Uterus (tissue), 4 donors: ENCODE measurements at regions of chr12 and their contacts with region 1.

Region 1: DNA sequence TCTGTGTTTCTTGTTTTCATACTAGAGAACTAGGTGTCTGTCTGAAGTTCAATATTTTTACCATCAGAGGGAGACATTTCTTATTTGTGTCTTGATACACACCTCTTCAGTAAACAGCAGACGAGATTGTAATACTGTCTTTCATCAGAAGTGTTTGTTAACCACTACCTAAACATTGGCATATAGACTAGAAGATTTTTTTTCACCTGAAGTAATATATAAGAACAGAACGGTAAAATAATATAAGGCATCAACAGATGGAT is 190.7 kb downstream of the ACSS3 start:
- DNase-seq: no peak
- H3K4me3 ChIP-seq: no peak overlapping the region
- H3K27ac ChIP-seq: no peak overlapping the region
- H3K4me1 ChIP-seq: no peaks in the 10 kb centered on the region
- H3K27me3 ChIP-seq: no peaks in the 10 kb centered on the region
- CTCF ChIP-seq: no peak
- POLR2A ChIP-seq: no peak

Region 2: DNA sequence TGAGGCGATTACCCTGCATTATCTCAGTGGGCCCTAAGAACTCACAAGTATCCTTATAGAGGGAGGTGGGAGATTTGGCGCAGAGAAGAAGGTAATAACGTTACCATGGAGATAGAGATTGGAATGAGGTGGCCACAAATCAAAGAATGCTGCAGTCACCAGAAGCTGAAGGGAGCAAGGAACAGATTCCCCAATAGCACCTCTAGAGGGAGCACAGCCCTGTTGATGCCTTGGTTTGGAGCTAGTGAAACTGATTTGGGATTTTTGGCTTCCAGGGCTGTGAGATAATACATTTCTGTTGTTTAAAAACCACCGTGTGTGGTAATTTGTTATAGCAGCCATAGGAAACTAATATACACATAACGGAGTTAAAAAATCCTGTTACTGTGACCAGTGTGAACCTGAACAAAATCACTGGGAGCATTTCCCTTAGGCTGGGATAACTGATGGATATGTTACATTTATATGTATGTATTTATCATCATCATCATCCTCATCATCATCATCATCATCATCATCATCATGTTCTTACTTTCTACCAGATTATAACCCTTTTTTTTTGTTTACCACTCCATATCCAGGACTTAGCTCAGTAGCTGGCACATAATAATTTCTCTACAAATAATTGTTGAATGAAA is 431.1 kb before region 1 on chr12:
- intact Hi-C with region 1: loop called (anchors 10 kb)
- DNase-seq: peak; percentile 22 to 31
- H3K4me3 ChIP-seq: no peak overlapping the region
- H3K27ac ChIP-seq: no peak overlapping the region
- H3K4me1 ChIP-seq: peaks cover 0 to 5% of the 10 kb centered on the region in 2 donors
- H3K27me3 ChIP-seq: no peaks in the 10 kb centered on the region
- CTCF ChIP-seq: peak; percentile 44 to 67 (median 54)
- POLR2A ChIP-seq: no peak